HepG2 (cell line): ENCODE measurements at regions of chr1 and their contacts with region 1.

Region 1: GRCh38 chr1:180515864-180516388 is 13.5 kb upstream of the ACBD6 start:
- DNase-seq: peak; percentile 76
- ATAC-seq: peak; percentile 99
- H3K4me3 ChIP-seq: no peak overlapping the region
- H3K27ac ChIP-seq: peak overlapping the region; percentile 19
- H3K4me1 ChIP-seq: peaks cover 22% of the 10 kb centered on the region
- H3K27me3 ChIP-seq: no peaks in the 10 kb centered on the region
- CTCF ChIP-seq: peak; percentile 89
- EP300 ChIP-seq: no peak
- POLR2A ChIP-seq: no peak
- RAD21 ChIP-seq: peak; percentile 74

Region 2: GRCh38 chr1:180502360-180503273 is 13.3 kb before region 1 on chr1 and contains the start of gene ACBD6:
- CTCF ChIA-PET with region 1: no interaction called
- POLR2A ChIA-PET with region 1: interaction called, 23 read pairs
- in situ Hi-C with region 1: no loop called
- intact Hi-C with region 1: no loop called
- DNase-seq: peak; percentile 71
- ATAC-seq: peak; percentile 93
- H3K4me3 ChIP-seq: peak within 1 kb of the TSS; percentile 73 to 90 (median 73)
- H3K27ac ChIP-seq: peak within 1 kb of the TSS; percentile 93
- H3K4me1 ChIP-seq: peaks cover 47% of the 10 kb centered on the region
- H3K27me3 ChIP-seq: no peaks in the 10 kb centered on the region; a peak in 1 of 5 replicates
- CTCF ChIP-seq: no peak; the same call in 1 of the 2 replicates
- EP300 ChIP-seq: 0 out of 4 replicates have a peak, but pooled peaks of 1 of the 2 experiments have one; percentile 7
- POLR2A ChIP-seq: peak; percentile 73 to 83
- RAD21 ChIP-seq: peak; percentile 29; the same call in 1 of the 2 replicates
- total RNA-seq, gene ACBD6: 40.3 and 47.2 TPM in 2 replicates

Region 3: GRCh38 chr1:180533266-180533987 is 17.5 kb after region 1 on chr1:
- CTCF ChIA-PET with region 1: interaction called, 6 read pairs
- POLR2A ChIA-PET with region 1: no interaction called
- in situ Hi-C with region 1: no loop called
- intact Hi-C with region 1: loop called (anchors 2 kb)
- DNase-seq: peak; percentile 53
- ATAC-seq: peak; percentile 90
- H3K4me3 ChIP-seq: peak overlapping the region in 1 of 3 experiments; percentile 4; a peak in 2 of 6 replicates
- H3K27ac ChIP-seq: no peak overlapping the region
- H3K4me1 ChIP-seq: peaks cover 22% of the 10 kb centered on the region; the same call in 1 of the 2 replicates
- H3K27me3 ChIP-seq: peaks cover 2 to 4% of the 10 kb centered on the region in 2 experiments; a peak in 3 of 5 replicates
- CTCF ChIP-seq: peak; percentile 88
- EP300 ChIP-seq: no peak
- POLR2A ChIP-seq: no peak
- RAD21 ChIP-seq: peak; percentile 76

Region 4: DNA sequence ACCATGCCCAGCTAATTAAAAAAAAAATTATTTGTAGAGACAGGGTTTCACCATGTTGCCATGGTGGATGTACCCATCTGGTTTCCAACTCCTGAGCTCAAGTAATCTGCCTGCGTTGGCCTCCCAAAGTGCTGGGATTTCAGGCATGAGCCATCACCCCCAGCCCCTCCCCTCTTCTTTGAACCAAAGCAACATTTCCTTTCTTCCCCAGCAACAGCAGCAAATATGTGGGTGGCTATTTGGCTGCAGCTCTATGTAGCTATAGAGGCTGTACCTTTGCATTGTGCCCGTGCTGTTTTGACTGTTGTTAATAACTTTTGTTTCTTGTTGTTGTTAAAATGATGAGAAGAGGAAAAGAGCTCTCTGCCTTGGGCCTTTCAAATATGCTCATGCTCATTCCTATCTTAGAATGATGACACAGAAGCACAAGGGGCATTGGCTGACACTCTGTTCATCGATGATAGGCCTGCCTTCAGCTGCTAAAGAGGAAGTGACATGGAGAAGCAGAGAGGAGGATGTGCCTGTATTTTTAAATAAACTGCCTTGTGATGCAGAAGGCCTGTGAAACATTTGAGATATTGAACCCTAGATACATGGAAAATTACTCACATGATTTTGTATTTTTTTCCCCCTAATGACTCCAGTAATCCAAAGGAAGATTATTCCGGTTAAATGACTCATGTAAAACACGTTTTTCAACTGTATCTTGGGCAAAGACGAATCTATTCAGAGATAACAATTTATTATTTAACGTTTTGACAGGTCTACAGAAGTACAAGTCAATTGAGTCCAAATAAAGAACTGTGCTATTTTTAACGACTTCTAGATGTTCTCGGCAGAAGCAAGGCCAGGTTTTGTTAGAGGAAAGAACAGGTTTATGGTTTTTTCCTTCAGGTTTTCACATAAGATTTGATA is 95.3 kb after region 1 on chr1:
- CTCF ChIA-PET with region 1: no interaction called
- POLR2A ChIA-PET with region 1: no interaction called
- in situ Hi-C with region 1: no loop called
- intact Hi-C with region 1: no loop called
- DNase-seq: no peak
- ATAC-seq: no peak
- H3K4me3 ChIP-seq: no peak overlapping the region
- H3K27ac ChIP-seq: no peak overlapping the region
- H3K4me1 ChIP-seq: peaks cover 16% of the 10 kb centered on the region
- H3K27me3 ChIP-seq: no peaks in the 10 kb centered on the region; a peak in 1 of 5 replicates
- CTCF ChIP-seq: no peak
- EP300 ChIP-seq: no peak
- POLR2A ChIP-seq: no peak
- RAD21 ChIP-seq: no peak

Region 5: DNA sequence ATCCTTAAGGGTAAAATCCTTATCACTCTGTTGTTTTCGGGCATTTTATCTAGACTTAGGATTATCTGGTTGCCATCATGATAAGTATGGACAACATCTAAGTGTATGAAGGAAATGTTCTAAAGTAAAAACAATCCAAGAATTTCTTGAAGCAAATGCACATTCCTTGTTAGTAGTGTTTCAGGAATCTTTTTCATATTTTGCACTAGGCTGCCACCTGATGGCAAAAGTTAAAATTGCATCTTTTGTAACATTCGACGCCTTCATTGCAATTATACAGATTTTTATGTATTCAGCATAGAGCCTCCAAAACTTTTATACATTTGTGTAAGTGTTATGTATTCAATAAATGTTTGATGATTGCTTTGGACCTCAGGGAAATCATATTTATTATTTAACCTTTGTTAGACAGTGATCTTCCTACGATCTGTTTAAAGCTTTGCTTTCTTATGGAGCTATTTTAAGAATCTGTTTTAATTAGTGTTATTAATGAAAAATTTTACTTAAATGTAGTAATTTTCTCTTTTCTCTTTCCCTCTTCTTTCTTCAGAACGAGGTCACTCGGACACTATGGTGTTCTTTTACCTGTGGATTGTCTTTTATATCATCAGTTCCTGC is 347.3 kb after region 1 on chr1:
- CTCF ChIA-PET with region 1: interaction called, 26 read pairs
- POLR2A ChIA-PET with region 1: interaction called, 4 read pairs
- in situ Hi-C with region 1: loop called (anchors 5 kb)
- intact Hi-C with region 1: loop called (anchors 5 kb)
- DNase-seq: peak; percentile 31
- ATAC-seq: no peak
- H3K4me3 ChIP-seq: no peak overlapping the region
- H3K27ac ChIP-seq: no peak overlapping the region
- H3K4me1 ChIP-seq: no peaks in the 10 kb centered on the region
- H3K27me3 ChIP-seq: no peaks in the 10 kb centered on the region
- CTCF ChIP-seq: peak; percentile 76
- EP300 ChIP-seq: no peak
- POLR2A ChIP-seq: no peak
- RAD21 ChIP-seq: peak; percentile 73

Region 6: GRCh38 chr1:181166377-181167196 is 650.7 kb after region 1 on chr1:
- CTCF ChIA-PET with region 1: no interaction called
- POLR2A ChIA-PET with region 1: no interaction called
- in situ Hi-C with region 1: no loop called
- intact Hi-C with region 1: loop called (anchors 1 kb)
- DNase-seq: peak; percentile 77
- ATAC-seq: peak; percentile 99
- H3K4me3 ChIP-seq: peak overlapping the region in 1 of 3 experiments; percentile 48; a peak in 2 of 6 replicates
- H3K27ac ChIP-seq: no peak overlapping the region
- H3K4me1 ChIP-seq: peaks cover 19% of the 10 kb centered on the region
- H3K27me3 ChIP-seq: no peaks in the 10 kb centered on the region
- CTCF ChIP-seq: peak; percentile 80
- EP300 ChIP-seq: no peak
- POLR2A ChIP-seq: no peak
- RAD21 ChIP-seq: peak; percentile 71